HepG2 (cell line): ENCODE measurements at regions of chr4 and their contacts with region 1.

Region 1: DNA sequence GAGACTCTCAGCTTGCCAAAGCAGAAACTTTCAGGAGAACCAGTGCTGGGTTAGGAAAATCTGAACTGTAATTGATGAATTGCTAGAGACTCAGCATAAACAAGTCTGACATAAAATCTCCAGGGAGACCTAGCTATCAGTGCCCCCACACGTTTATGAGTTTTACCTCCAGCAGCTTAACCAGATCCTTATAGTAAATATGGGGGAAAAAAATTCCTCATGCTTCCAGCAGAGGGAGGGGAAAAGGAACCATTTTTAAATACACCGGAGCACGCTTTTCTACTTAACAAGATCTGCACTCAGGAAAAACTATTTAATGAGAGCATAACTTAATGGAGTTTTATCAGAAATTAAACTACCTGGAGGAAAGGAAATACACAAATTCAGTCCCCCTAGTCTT is 1040.7 kb upstream of the INTU start:
- DNase-seq: no peak
- ATAC-seq: peak; percentile 45; the same call in 1 of the 3 replicates
- H3K4me3 ChIP-seq: no peak overlapping the region
- H3K27ac ChIP-seq: no peak overlapping the region
- H3K4me1 ChIP-seq: no peaks in the 10 kb centered on the region
- H3K27me3 ChIP-seq: no peaks in the 10 kb centered on the region
- CTCF ChIP-seq: no peak
- EP300 ChIP-seq: no peak
- POLR2A ChIP-seq: no peak
- RAD21 ChIP-seq: no peak

Region 2: GRCh38 chr4:126470862-126471261 is 121.2 kb before region 1 on chr4:
- CTCF ChIA-PET with region 1: no interaction called
- POLR2A ChIA-PET with region 1: no interaction called
- in situ Hi-C with region 1: no loop called
- intact Hi-C with region 1: no loop called
- DNase-seq: no peak
- ATAC-seq: no peak
- H3K4me3 ChIP-seq: no peak overlapping the region
- H3K27ac ChIP-seq: no peak overlapping the region
- H3K4me1 ChIP-seq: no peaks in the 10 kb centered on the region
- H3K27me3 ChIP-seq: no peaks in the 10 kb centered on the region
- CTCF ChIP-seq: no peak
- EP300 ChIP-seq: no peak
- POLR2A ChIP-seq: no peak
- RAD21 ChIP-seq: no peak

Region 3: DNA sequence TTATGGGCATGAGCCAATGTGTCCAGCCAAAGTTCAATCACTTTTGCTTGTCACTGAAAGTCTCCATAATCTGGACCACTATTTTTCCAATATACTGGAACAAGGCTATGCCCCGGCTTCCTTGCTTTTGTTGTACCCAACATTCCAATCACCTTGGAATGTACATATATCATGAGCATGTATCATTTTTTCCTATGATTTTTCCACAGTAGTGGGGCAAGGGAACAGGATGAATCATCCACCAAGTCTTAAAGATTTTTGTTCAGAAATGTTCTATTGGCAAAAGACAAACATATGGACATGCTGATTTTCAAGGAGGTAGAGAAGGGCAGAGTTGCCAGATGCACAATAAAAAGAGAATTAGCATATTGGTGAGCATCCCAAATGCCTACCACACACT is 492.6 kb after region 1 on chr4:
- CTCF ChIA-PET with region 1: no interaction called
- POLR2A ChIA-PET with region 1: no interaction called
- in situ Hi-C with region 1: no loop called
- intact Hi-C with region 1: no loop called
- DNase-seq: no peak
- ATAC-seq: no peak
- H3K4me3 ChIP-seq: no peak overlapping the region
- H3K27ac ChIP-seq: no peak overlapping the region
- H3K4me1 ChIP-seq: no peaks in the 10 kb centered on the region
- H3K27me3 ChIP-seq: no peaks in the 10 kb centered on the region
- CTCF ChIP-seq: no peak
- EP300 ChIP-seq: no peak
- POLR2A ChIP-seq: no peak
- RAD21 ChIP-seq: no peak

Region 4: GRCh38 chr4:127124920-127125319 is 532.8 kb after region 1 on chr4:
- CTCF ChIA-PET with region 1: no interaction called
- POLR2A ChIA-PET with region 1: no interaction called
- in situ Hi-C with region 1: no loop called
- intact Hi-C with region 1: loop called (anchors 5 kb)
- DNase-seq: peak; percentile 1
- ATAC-seq: no peak
- H3K4me3 ChIP-seq: no peak overlapping the region
- H3K27ac ChIP-seq: no peak overlapping the region
- H3K4me1 ChIP-seq: no peaks in the 10 kb centered on the region
- H3K27me3 ChIP-seq: no peaks in the 10 kb centered on the region
- CTCF ChIP-seq: peak; percentile 29
- EP300 ChIP-seq: no peak
- POLR2A ChIP-seq: no peak
- RAD21 ChIP-seq: no peak